SK-N-SH (cell line): ENCODE measurements at regions of chr1 and their contacts with region 1.

Region 1: DNA sequence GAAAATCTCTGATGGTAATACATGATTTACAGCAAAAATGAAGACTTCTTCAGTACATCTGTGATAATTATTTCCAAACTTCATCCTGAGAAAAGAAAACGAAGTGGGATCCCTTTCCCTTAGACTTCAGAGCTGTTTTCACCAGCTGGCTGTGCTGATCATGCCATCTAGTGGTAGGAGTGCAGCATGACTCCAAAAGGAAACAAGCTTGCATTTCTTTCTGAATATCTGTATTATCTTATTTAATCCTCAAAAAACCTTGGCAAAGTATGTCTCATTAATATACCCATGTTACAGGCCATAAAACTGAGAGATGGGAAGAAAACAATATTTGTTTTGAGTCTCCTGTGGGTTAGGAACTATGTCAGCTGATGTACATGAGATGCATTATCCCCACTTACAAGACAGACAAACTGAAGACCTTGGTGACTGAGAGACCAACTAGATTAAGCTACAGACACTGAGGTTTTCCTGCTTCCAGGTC is 9.8 kb upstream of the GJA8 start:
- DNase-seq: peak; percentile 49
- H3K4me3 ChIP-seq: no peak overlapping the region; a peak in 1 of 4 replicates
- H3K27ac ChIP-seq: no peak overlapping the region
- H3K4me1 ChIP-seq: peaks cover 0 to 9% of the 10 kb centered on the region in 2 experiments; a peak in 1 of 4 replicates
- H3K27me3 ChIP-seq: no peaks in the 10 kb centered on the region
- CTCF ChIP-seq: peak; percentile 98
- EP300 ChIP-seq: no peak
- RAD21 ChIP-seq: peak; percentile 84

Region 2: GRCh38 chr1:147569587-147570241 is 323.1 kb before region 1 on chr1:
- CTCF ChIA-PET with region 1: no interaction called
- POLR2A ChIA-PET with region 1: no interaction called
- DNase-seq: no peak
- H3K4me3 ChIP-seq: no peak overlapping the region
- H3K27ac ChIP-seq: no peak overlapping the region
- H3K4me1 ChIP-seq: no peaks in the 10 kb centered on the region
- H3K27me3 ChIP-seq: no peaks in the 10 kb centered on the region
- CTCF ChIP-seq: no peak
- EP300 ChIP-seq: no peak
- RAD21 ChIP-seq: no peak

Region 3: DNA sequence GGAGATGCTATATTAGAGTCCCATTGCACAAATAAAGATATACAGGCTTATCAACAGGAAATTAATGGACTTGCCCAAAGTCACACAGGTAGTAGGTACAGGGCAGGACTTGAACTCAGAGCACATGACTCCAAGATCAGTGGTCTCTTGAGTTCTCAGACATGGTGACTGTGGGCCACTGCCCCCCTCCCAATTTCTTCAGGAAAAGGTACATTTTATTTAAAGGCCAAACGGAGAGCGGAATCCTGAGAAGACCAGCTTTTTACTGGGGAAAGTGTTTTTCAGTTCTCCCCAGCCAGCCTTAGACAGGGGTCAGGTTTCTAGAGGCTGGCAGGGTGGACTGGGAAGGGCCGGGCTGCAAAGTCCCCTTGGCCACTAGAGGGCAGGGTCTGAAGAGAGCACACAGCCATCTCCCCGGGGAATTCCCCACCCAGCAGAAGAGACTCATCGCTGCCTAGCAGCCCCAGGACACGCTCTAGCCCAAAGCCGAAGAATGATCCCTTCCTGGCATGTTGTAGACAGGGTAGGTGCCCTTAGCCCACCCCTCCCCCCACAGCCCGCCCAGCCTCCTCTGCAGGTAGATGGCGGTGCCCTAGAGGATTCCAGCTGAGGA is 252.1 kb before region 1 on chr1:
- CTCF ChIA-PET with region 1: interaction called, 10 read pairs
- POLR2A ChIA-PET with region 1: no interaction called
- DNase-seq: peak; percentile 68
- H3K4me3 ChIP-seq: no peak overlapping the region
- H3K27ac ChIP-seq: no peak overlapping the region
- H3K4me1 ChIP-seq: no peaks in the 10 kb centered on the region; a peak in 1 of 4 replicates
- H3K27me3 ChIP-seq: no peaks in the 10 kb centered on the region
- CTCF ChIP-seq: peak; percentile 77
- EP300 ChIP-seq: no peak
- RAD21 ChIP-seq: peak; percentile 41

Region 4: DNA sequence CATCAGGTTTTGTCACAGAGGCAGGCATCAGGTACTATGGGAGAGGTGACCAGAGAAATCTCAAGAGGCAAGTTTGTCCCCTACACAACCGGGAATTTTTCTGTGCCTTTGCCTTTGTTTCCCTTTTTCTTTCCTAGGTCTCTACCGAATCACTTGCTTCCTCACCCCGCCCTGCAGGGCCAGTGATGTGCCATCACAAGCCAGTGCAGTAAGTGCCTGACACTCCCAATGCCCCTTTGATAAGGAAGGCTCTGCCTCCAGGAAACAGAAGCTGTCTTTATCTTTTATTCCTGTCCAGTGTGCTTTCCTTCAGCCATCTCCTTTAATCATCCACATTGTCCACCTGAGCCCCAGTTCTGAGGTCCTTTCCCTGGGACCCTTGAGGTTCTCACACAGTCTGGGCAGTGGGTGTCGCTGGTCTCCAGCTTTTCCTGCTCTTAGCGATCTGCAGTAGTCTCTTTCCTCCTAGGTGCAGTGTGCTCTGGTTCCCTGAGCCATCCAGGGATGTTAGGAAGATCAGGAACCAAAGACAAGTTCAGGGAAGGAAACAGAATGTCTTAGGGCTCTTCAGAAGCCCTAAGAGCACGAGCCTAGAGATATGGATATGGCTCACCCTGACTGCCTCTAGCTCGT is 169.0 kb before region 1 on chr1:
- CTCF ChIA-PET with region 1: interaction called, 23 read pairs
- POLR2A ChIA-PET with region 1: no interaction called
- DNase-seq: peak; percentile 14
- H3K4me3 ChIP-seq: no peak overlapping the region
- H3K27ac ChIP-seq: no peak overlapping the region
- H3K4me1 ChIP-seq: no peaks in the 10 kb centered on the region
- H3K27me3 ChIP-seq: peaks cover 8% of the 10 kb centered on the region; the same call in 1 of the 2 replicates
- CTCF ChIP-seq: peak; percentile 35
- EP300 ChIP-seq: no peak
- RAD21 ChIP-seq: peak; percentile 61

Region 5: DNA sequence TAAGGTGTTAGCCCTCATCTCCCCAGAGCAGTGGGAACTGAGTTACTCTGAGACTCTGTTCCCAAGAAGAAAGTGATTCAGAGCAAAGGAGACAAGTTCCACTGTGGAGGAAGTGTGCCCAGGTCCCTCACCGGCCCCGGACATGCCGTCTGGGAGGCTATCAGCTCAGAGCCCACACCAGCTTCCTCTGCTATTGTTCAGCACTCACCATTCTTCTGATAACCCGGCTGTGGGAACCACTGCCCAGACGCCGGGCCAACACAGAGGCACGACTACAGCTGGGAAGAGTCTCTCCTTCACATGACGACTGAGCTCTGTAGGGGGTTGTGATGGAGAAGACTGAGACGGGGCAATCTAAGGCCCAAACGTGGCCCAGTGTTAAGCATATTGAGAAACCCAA is 98.2 kb before region 1 on chr1:
- CTCF ChIA-PET with region 1: no interaction called
- POLR2A ChIA-PET with region 1: no interaction called
- DNase-seq: no peak
- H3K4me3 ChIP-seq: no peak overlapping the region
- H3K27ac ChIP-seq: no peak overlapping the region
- H3K4me1 ChIP-seq: no peaks in the 10 kb centered on the region
- H3K27me3 ChIP-seq: peaks cover 9% of the 10 kb centered on the region; the same call in 1 of the 2 replicates
- CTCF ChIP-seq: no peak
- EP300 ChIP-seq: no peak
- RAD21 ChIP-seq: no peak

Region 6: DNA sequence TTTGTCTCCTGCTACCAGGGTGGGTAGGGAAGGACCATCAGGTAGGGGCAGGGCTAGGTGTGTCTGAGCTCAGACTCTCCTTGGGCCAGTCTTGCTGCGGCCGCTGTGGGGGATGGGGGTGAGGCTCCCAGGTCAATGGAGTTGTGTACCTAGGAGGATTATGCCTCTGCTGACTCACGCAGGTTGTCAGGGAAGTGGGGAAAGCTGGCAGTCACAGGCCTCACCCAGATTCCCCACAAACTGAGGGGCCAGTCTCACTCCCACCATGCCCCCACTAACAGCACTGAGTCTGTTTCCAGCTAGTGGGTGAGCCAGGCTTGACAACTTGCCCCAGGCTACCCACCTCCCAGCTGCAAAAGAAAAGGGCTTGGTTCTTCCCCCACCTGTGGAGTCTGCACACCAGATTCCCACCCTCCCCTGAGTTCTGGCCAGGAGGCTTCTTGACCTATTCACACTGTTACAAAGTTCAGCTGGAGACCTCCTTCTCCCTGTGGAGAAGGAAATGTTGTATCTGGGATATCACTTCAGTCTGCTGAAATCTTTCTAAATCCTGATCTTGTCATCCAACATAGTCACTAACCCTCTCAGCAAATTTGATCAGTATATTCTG is 59.4 kb before region 1 on chr1:
- CTCF ChIA-PET with region 1: no interaction called
- POLR2A ChIA-PET with region 1: no interaction called
- DNase-seq: no peak
- H3K4me3 ChIP-seq: no peak overlapping the region
- H3K27ac ChIP-seq: no peak overlapping the region
- H3K4me1 ChIP-seq: no peaks in the 10 kb centered on the region
- H3K27me3 ChIP-seq: no peaks in the 10 kb centered on the region; the same call in 1 of the 2 replicates
- CTCF ChIP-seq: no peak
- EP300 ChIP-seq: no peak
- RAD21 ChIP-seq: no peak

Region 7: DNA sequence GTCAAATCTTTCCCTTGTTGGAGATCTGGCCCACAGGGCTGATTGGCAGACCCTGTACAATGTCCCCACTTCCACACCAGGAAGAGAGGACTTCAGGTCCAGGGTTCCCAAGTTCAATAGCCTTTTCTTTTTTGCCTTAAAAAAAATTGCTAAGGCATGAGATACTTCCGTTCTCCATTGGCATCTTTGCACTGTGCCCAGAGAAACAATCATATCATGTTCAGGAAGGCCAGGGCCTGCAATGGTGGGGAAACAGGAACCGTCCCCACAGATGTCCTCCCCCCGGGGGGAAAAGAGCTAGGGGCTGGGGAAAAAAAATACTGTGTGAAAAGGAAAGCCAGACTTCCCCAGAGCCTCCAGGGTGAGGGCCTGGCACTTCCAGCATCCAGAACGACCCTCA is 14.8 kb before region 1 on chr1:
- CTCF ChIA-PET with region 1: interaction called, 12 read pairs
- POLR2A ChIA-PET with region 1: no interaction called
- DNase-seq: no peak
- H3K4me3 ChIP-seq: no peak overlapping the region
- H3K27ac ChIP-seq: no peak overlapping the region
- H3K4me1 ChIP-seq: no peaks in the 10 kb centered on the region
- H3K27me3 ChIP-seq: no peaks in the 10 kb centered on the region
- CTCF ChIP-seq: no peak
- EP300 ChIP-seq: no peak
- RAD21 ChIP-seq: no peak

Region 8: GRCh38 chr1:147912553-147912952 is 19.8 kb after region 1 on chr1:
- CTCF ChIA-PET with region 1: interaction called, 19 read pairs
- POLR2A ChIA-PET with region 1: no interaction called
- DNase-seq: no peak
- H3K4me3 ChIP-seq: no peak overlapping the region
- H3K27ac ChIP-seq: no peak overlapping the region
- H3K4me1 ChIP-seq: no peaks in the 10 kb centered on the region
- H3K27me3 ChIP-seq: peaks cover 8% of the 10 kb centered on the region; the same call in 1 of the 2 replicates
- CTCF ChIP-seq: no peak
- EP300 ChIP-seq: no peak
- RAD21 ChIP-seq: no peak